Activated CD8-positive, alpha-beta T cell treated with anti-CD3 and anti-CD28 coated beads for 36 hours (primary cell): ENCODE measurements at regions of chr9 and their contacts with region 1.

Region 1: GRCh38 chr9:128818099-128818838 is at the start of gene ENDOG:
- DNase-seq: peak; percentile 98
- ATAC-seq: peak; percentile 97
- H3K4me3 Mint-ChIP-seq: peak within 1 kb of the TSS; percentile 80
- H3K27ac Mint-ChIP-seq: peak within 1 kb of the TSS; percentile 84
- H3K4me1 Mint-ChIP-seq: peaks cover 19% of the 10 kb centered on the region
- H3K27me3 Mint-ChIP-seq: no peaks in the 10 kb centered on the region
- CTCF ChIP-seq: peak; percentile 94
- total RNA-seq, gene ENDOG: 21.8 to 23.9 TPM

Region 2: GRCh38 chr9:128688512-128689292 is 129.6 kb before region 1 on chr9 and contains the start of gene SET:
- CTCF ChIA-PET with region 1: interaction called, 3 read pairs
- POLR2A ChIA-PET with region 1: interaction called, 10 read pairs
- intact Hi-C with region 1: no loop called
- DNase-seq: peak; percentile 94
- ATAC-seq: peak; percentile 78
- H3K4me3 Mint-ChIP-seq: peak within 1 kb of the TSS; percentile 98
- H3K27ac Mint-ChIP-seq: peak within 1 kb of the TSS; percentile 98
- H3K4me1 Mint-ChIP-seq: peaks cover 60% of the 10 kb centered on the region
- H3K27me3 Mint-ChIP-seq: no peaks in the 10 kb centered on the region
- CTCF ChIP-seq: no peak
- total RNA-seq, gene SET: 749 to 755 TPM

Region 3: GRCh38 chr9:128750926-128751595 is 67.2 kb before region 1 on chr9:
- CTCF ChIA-PET with region 1: no interaction called
- POLR2A ChIA-PET with region 1: no interaction called
- intact Hi-C with region 1: no loop called
- DNase-seq: no peak
- ATAC-seq: no peak
- H3K4me3 Mint-ChIP-seq: no peak overlapping the region
- H3K27ac Mint-ChIP-seq: no peak overlapping the region
- H3K4me1 Mint-ChIP-seq: no peaks in the 10 kb centered on the region
- H3K27me3 Mint-ChIP-seq: no peaks in the 10 kb centered on the region
- CTCF ChIP-seq: no peak

Region 4: GRCh38 chr9:128781187-128782070 is 36.8 kb before region 1 on chr9:
- CTCF ChIA-PET with region 1: interaction called, 11 read pairs
- POLR2A ChIA-PET with region 1: no interaction called
- intact Hi-C with region 1: no loop called
- DNase-seq: no peak
- ATAC-seq: no peak
- H3K4me3 Mint-ChIP-seq: no peak overlapping the region
- H3K27ac Mint-ChIP-seq: no peak overlapping the region
- H3K4me1 Mint-ChIP-seq: peaks cover 10% of the 10 kb centered on the region
- H3K27me3 Mint-ChIP-seq: no peaks in the 10 kb centered on the region
- CTCF ChIP-seq: no peak

Region 5: DNA sequence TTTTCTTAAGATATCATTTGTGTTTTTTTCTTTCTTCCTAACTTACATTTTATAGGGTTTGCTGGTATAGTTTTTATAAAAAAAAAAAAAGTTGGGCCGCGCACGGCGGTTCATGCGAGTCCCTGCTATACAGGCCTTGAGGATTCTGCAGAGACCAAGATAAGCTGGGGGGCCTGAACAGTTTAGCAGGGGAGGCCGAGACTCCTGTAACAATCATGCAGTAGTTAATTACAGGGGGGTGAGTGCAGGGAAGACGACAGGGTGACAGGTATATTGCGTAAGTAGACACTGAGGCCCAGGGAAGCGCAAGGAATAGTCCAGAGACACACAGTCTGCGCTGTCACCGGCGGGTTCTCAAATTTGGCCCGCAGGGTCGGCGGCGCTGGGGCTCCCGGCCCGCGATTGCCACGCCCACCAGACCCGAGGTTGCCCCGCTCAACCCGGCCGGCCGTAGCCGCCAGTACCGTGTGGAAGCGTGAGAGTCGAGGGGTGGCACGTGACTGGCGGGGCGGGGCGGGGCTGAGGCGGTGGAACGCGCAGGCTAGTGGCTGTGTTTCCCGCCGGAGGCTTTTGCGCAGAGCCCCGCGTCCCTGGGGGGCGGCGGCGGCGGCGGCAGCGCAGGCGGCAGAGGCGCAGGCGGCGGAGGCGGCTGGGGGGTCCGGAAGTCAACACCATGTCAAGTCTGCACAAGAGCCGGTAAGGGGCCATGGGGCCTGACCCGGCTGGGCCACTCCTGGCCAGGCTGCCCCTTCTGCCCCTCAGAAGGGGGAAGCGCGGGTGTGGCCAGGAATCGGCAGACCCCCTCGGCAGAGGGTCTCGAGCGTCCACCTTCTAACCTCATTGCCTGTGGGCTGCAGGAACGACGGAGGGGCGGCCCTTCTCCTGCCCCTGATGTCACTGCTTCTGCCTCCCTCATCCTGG is 31.3 kb before region 1 on chr9 and contains the start of gene TBC1D13:
- CTCF ChIA-PET with region 1: interaction called, 14 read pairs
- POLR2A ChIA-PET with region 1: interaction called, 5 read pairs
- intact Hi-C with region 1: no loop called
- DNase-seq: peak; percentile 90
- ATAC-seq: peak; percentile 97
- H3K4me3 Mint-ChIP-seq: peak within 1 kb of the TSS; percentile 93
- H3K27ac Mint-ChIP-seq: peak within 1 kb of the TSS; percentile 85
- H3K4me1 Mint-ChIP-seq: peaks cover 20% of the 10 kb centered on the region
- H3K27me3 Mint-ChIP-seq: no peaks in the 10 kb centered on the region
- CTCF ChIP-seq: no peak
- total RNA-seq, gene TBC1D13: 11.7 to 12.5 TPM

Region 6: DNA sequence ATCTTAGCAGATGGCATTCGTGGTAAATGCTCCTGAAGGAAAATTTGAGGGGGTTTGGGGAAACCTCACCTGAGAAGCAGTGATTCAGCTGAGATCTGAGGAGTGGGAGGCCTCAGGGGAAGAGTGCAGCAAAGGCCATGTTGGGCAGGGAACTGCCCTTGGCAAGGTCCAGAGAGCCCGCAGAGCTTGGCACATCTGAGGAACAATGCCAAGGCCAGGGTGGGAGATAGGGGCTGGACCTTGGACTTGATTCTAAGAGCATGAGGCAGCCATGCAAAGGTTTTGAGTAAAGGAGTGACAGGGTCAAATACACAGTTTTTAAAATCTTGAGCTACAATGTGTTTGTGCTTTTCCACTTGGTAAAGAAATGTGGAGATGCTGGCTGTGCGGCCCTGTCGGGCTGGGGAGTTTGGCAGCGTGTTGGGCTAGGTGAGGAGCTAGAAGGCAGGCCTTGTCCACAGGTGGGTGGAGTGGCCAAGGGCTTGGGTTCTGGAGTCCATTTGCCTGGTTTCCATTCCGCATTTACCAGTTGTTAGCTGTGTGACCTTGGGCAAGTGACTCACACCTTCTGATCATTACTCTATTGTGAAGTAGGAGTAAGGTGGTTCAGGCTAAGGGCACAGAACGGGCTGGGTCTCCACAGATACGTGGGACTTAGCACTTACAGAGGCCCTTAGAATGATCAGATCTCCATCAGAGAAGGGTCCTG is 25.1 kb before region 1 on chr9:
- CTCF ChIA-PET with region 1: interaction called, 14 read pairs
- POLR2A ChIA-PET with region 1: interaction called, 5 read pairs
- intact Hi-C with region 1: no loop called
- DNase-seq: no peak
- ATAC-seq: no peak
- H3K4me3 Mint-ChIP-seq: no peak overlapping the region
- H3K27ac Mint-ChIP-seq: peak overlapping the region; percentile 41
- H3K4me1 Mint-ChIP-seq: peaks cover 11% of the 10 kb centered on the region
- H3K27me3 Mint-ChIP-seq: no peaks in the 10 kb centered on the region
- CTCF ChIP-seq: no peak

Region 7: GRCh38 chr9:128829477-128830251 is 11.4 kb after region 1 on chr9 and contains the start of gene SPOUT1:
- CTCF ChIA-PET with region 1: interaction called, 53 read pairs
- POLR2A ChIA-PET with region 1: interaction called, 41 read pairs
- intact Hi-C with region 1: no loop called
- DNase-seq: peak; percentile 96
- ATAC-seq: peak; percentile 99
- H3K4me3 Mint-ChIP-seq: peak within 1 kb of the TSS; percentile 89
- H3K27ac Mint-ChIP-seq: peak within 1 kb of the TSS; percentile 84
- H3K4me1 Mint-ChIP-seq: peaks cover 22% of the 10 kb centered on the region
- H3K27me3 Mint-ChIP-seq: no peaks in the 10 kb centered on the region
- CTCF ChIP-seq: no peak
- total RNA-seq, gene SPOUT1: 85.9 to 91.2 TPM